A673 (cell line): ENCODE measurements at regions of chr19 and their contacts with region 1.

Region 1: DNA sequence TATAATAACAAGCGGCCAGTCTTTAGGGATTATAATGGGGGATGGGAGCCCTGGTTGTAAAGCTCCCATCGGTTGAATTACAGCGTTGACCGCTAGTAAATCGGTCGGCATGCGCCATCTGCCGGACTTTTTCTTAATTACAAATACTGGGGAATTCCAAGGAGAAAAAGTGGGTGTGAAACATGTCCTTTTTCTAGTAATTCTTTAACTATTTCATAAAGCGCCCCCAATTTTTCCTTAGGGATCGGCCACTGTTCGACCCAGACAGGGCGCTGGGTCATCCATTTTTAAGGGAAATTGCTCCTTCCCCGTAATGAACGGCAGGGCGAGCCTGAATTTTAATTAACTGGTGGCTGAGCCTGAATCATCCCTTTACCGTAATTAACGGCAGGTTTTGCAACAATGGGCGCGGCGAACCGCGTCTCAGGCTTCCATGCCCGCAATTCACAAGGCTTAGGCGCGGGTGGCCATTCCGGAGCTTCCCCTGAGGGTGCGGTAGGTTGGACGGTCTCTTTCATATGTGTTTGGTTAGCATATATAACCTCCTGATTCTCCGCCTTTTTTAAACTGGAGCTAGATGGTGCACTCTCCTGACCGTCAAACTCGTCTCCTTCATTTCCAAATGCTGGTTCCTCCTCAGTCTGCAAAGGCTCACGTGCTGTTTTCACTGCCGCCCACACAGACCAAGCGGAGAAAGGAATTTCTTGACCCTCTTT is 30.2 kb upstream of the EVI5L start:
- DNase-seq: peak; percentile 81
- H3K4me3 ChIP-seq: peak overlapping the region; percentile 27
- H3K27ac ChIP-seq: no peak overlapping the region
- H3K4me1 ChIP-seq: no peaks in the 10 kb centered on the region
- H3K27me3 ChIP-seq: peaks cover 25% of the 10 kb centered on the region
- CTCF ChIP-seq: peak; percentile 78

Region 2: DNA sequence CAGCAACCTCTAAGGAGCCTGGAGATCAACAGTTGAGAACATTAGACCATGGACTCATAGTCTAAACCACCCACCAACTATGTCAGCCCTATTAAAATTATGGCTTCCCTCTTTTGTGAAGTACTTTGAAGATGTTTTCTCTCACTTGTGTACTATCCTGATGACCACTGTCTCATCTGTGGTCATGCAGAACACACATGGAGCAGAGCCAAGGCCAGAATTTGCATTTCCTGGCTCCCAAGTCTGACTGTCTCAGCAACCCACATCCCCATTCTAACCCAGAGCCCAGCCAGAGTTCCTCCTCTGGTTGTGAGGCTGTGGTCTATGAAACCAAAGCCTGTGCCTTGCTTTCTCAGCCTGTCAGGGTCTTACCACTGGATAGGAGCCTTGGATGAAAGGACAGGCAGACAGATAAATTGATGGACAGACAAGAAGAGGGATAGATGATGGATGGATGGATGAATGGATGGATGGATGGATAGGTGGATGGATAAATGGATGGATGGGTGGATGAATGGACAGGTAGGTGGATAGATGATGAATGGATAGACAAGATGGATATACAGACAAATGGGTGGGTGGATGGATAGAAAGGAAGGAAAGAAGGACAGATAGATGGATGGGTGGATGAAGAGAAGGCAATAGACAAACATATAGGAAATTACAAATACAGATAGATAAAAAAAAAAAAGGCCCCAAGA is 694.9 kb before region 1 on chr19:
- CTCF ChIA-PET with region 1: no interaction called
- POLR2A ChIA-PET with region 1: no interaction called
- intact Hi-C with region 1: loop called (anchors 5 kb)
- DNase-seq: no peak
- H3K4me3 ChIP-seq: no peak overlapping the region
- H3K27ac ChIP-seq: no peak overlapping the region
- H3K4me1 ChIP-seq: peaks cover under 1% of the 10 kb centered on the region
- H3K27me3 ChIP-seq: no peaks in the 10 kb centered on the region
- CTCF ChIP-seq: no peak

Region 3: DNA sequence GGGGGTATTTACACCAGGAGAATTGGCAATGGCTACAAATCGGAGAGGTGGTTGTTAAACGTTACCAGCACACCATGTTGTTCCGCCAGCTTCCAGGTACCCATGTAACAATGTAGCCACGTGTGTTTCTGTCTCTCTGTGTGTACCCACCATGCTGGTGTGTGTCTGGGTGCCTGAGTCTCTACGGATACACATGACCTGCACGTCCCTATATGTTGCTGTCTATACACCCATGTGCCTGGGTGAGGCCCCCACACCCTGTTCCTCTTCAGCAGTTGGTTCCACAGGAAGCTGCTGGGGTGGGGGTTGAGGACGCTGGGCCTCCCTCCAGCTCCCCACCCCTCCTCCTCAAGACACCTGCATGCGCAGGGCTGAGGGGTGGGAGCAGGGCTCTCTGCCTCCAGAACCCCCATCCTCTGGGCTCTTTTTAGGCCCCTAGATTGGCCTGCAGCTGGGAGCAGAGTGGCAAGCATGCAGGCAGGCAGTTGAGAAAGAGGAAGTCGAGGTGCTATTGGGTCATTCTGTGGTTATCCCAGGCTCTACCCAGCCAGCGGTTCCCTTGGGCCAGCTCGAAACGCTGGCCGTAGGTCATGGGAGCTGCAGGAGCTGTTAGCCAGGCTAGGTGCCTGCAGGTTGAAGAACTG is 451.1 kb before region 1 on chr19 and contains the start of gene ARHGEF18:
- CTCF ChIA-PET with region 1: interaction called, 15 read pairs
- POLR2A ChIA-PET with region 1: no interaction called
- intact Hi-C with region 1: no loop called
- DNase-seq: no peak
- H3K4me3 ChIP-seq: no peak within 1 kb of the TSS
- H3K27ac ChIP-seq: no peak within 1 kb of the TSS
- H3K4me1 ChIP-seq: no peaks in the 10 kb centered on the region
- H3K27me3 ChIP-seq: peaks cover 7% of the 10 kb centered on the region
- CTCF ChIP-seq: no peak
- total RNA-seq, gene ARHGEF18: 33.4 and 34.9 TPM in 2 replicates

Region 4: GRCh38 chr19:7471696-7472615 is 327.8 kb before region 1 on chr19:
- CTCF ChIA-PET with region 1: no interaction called
- POLR2A ChIA-PET with region 1: no interaction called
- intact Hi-C with region 1: no loop called
- DNase-seq: no peak
- H3K4me3 ChIP-seq: no peak overlapping the region
- H3K27ac ChIP-seq: no peak overlapping the region
- H3K4me1 ChIP-seq: no peaks in the 10 kb centered on the region
- H3K27me3 ChIP-seq: no peaks in the 10 kb centered on the region
- CTCF ChIP-seq: no peak

Region 5: GRCh38 chr19:7562646-7563393 is 237.0 kb before region 1 on chr19:
- CTCF ChIA-PET with region 1: interaction called, 39 read pairs
- POLR2A ChIA-PET with region 1: no interaction called
- intact Hi-C with region 1: loop called (anchors 2 kb)
- DNase-seq: no peak
- H3K4me3 ChIP-seq: no peak overlapping the region
- H3K27ac ChIP-seq: no peak overlapping the region
- H3K4me1 ChIP-seq: no peaks in the 10 kb centered on the region
- H3K27me3 ChIP-seq: no peaks in the 10 kb centered on the region
- CTCF ChIP-seq: no peak

Region 6: GRCh38 chr19:7652061-7652641 is 147.6 kb before region 1 on chr19:
- CTCF ChIA-PET with region 1: no interaction called
- POLR2A ChIA-PET with region 1: no interaction called
- intact Hi-C with region 1: loop called (anchors 5 kb)
- DNase-seq: peak; percentile 76
- H3K4me3 ChIP-seq: peak overlapping the region; percentile 20
- H3K27ac ChIP-seq: no peak overlapping the region
- H3K4me1 ChIP-seq: no peaks in the 10 kb centered on the region
- H3K27me3 ChIP-seq: no peaks in the 10 kb centered on the region
- CTCF ChIP-seq: peak; percentile 97